OCI-LY7 (cell line): ENCODE measurements at regions of chr2 and their contacts with region 1.

Region 1: DNA sequence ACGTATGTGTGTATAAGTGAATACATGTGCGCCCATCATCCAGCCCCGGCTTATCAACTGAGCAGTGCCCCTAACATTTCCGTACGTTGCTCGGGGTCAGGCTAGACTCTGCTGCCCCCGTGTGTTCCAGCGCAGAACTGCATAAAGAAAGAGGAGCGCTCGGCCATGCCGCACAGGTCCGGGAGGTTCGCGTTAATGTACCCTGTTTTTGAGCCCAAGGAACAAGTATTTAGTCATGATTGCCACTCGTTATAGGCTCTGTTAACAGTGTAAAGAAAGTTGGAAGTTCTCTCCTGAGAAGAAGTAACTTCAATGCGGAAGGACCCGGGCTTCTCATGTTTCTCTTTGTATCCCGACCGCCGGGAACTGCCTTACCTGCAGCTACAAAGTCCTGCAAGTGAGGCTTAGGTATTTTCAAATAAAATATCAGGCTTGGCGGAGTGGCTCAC is 55.7 kb downstream of the CD8B2 start:
- DNase-seq: peak; percentile 63
- H3K4me3 ChIP-seq: no peak overlapping the region
- H3K27ac ChIP-seq: no peak overlapping the region
- H3K4me1 ChIP-seq: no peaks in the 10 kb centered on the region
- CTCF ChIP-seq: peak; percentile 84

Region 2: GRCh38 chr2:105919826-105920225 is 623.0 kb before region 1 on chr2:
- CTCF ChIA-PET with region 1: no interaction called
- POLR2A ChIA-PET with region 1: no interaction called
- intact Hi-C with region 1: loop called (anchors 10 kb)
- DNase-seq: peak; percentile 11
- H3K4me3 ChIP-seq: no peak overlapping the region
- H3K27ac ChIP-seq: no peak overlapping the region
- H3K4me1 ChIP-seq: peaks cover 11% of the 10 kb centered on the region
- CTCF ChIP-seq: peak; percentile 75

Region 3: DNA sequence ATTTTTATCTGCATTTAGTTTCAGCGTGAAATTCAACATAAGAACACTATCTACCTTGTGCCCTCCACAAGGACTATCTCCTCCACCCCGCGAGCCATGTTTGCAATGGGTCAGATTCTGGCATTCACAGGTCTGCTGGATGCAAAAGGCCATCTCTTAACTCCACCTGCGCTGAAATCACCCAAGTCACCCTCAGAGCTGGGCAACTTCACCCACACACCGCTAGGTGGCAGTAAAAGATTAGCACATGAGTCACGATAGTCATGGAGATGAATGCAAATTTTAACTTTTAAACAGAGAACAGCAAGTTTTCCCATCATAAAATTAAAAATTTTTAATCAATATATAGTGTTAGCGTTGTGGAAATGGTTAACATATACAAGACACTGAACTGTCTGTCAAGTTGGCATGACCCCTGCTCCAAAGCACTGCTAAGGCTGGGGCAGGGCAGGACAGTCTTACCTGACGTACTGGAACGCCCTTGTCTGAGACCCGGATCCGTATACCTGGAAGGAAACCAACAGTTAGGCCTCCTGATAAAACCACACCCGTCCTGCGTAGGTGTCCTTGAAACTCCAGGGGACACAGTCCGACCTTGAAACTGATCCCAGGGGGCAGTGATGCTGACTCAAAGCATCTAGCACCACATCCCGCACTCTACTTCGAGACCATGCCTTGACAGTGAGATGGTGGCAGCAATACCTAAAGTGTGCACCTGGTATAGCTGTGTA is 438.3 kb before region 1 on chr2:
- CTCF ChIA-PET with region 1: no interaction called
- POLR2A ChIA-PET with region 1: no interaction called
- intact Hi-C with region 1: loop called (anchors 2 kb)
- DNase-seq: peak; percentile 70
- H3K4me3 ChIP-seq: no peak overlapping the region
- H3K27ac ChIP-seq: no peak overlapping the region
- H3K4me1 ChIP-seq: no peaks in the 10 kb centered on the region
- CTCF ChIP-seq: peak; percentile 100

Region 4: DNA sequence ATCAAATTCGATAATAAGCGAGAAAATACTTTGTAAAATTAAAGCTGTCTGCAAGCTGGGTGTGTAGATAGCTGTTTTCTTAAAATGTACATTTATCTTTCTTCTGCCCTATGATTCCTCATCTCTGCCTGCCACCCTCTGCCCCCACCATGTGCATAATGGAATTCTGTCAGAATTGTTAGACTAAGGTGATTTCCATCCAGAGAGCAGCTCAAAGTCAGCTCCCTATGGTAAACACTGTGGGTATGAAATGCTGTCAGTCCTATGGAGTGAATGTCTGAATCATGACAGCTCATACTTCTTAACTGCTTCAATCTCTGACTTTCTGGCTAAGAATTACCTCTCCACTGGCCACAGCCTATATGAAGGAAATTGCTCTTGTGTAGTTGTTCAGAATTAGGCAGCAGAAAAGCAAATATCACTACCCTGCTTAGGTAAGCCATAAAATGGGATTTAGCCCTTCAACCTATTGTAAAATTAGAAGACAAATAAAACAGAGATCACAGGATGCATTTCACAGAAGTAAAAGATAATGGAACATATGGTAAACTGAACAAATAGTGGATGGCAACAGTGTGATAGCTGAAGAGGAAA is 82.0 kb after region 1 on chr2:
- CTCF ChIA-PET with region 1: no interaction called
- POLR2A ChIA-PET with region 1: no interaction called
- intact Hi-C with region 1: no loop called
- DNase-seq: no peak
- H3K4me3 ChIP-seq: no peak overlapping the region
- H3K27ac ChIP-seq: no peak overlapping the region
- H3K4me1 ChIP-seq: no peaks in the 10 kb centered on the region
- CTCF ChIP-seq: no peak